Calu3 (cell line): ENCODE measurements at regions of chrX and their contacts with region 1.

Region 1: GRCh38 chrX:48021026-48021900 is 14.5 kb downstream of the SPACA5 start:
- DNase-seq: peak; percentile 79
- H3K4me3 Mint-ChIP-seq: peak overlapping the region; percentile 86
- H3K27ac Mint-ChIP-seq: peak overlapping the region; percentile 99
- H3K4me1 Mint-ChIP-seq: peaks cover 8% of the 10 kb centered on the region
- H3K27me3 Mint-ChIP-seq: no peaks in the 10 kb centered on the region
- CTCF ChIP-seq: no peak

Region 2: DNA sequence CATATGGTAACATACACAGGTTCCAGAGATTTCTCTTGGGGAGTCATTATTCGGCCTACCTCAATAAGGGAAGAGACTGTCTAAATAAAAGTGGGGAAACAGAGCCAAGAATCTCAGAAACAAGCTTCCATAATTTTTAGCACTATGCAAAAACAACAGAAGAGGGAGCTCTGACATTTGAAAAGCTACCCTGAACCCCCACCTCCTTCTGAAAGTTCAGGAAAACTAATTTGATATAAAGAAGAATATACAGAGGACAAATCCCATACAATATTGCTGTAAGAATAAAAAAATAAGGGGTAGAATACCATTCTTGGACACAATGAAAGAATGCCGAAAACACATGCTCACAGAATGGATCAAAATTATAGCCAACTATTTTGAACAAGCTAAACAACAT is 524.0 kb before region 1 on chrX:
- CTCF ChIA-PET with region 1: no interaction called
- intact Hi-C with region 1: loop called (anchors 5 kb)
- DNase-seq: no peak
- H3K4me3 Mint-ChIP-seq: no peak overlapping the region
- H3K27ac Mint-ChIP-seq: no peak overlapping the region
- H3K4me1 Mint-ChIP-seq: no peaks in the 10 kb centered on the region
- H3K27me3 Mint-ChIP-seq: no peaks in the 10 kb centered on the region
- CTCF ChIP-seq: no peak

Region 3: GRCh38 chrX:47836164-47837072 is 184.8 kb before region 1 on chrX and contains the start of gene ZNF81:
- CTCF ChIA-PET with region 1: no interaction called
- intact Hi-C with region 1: loop called (anchors 1 kb)
- DNase-seq: peak; percentile 93
- H3K4me3 Mint-ChIP-seq: peak within 1 kb of the TSS; percentile 96
- H3K27ac Mint-ChIP-seq: peak within 1 kb of the TSS; percentile 83
- H3K4me1 Mint-ChIP-seq: no peaks in the 10 kb centered on the region
- H3K27me3 Mint-ChIP-seq: no peaks in the 10 kb centered on the region
- CTCF ChIP-seq: no peak
- total RNA-seq, gene ZNF81: 10.5 and 10.7 TPM in 2 replicates

Region 4: GRCh38 chrX:47854474-47854873 is 166.8 kb before region 1 on chrX:
- CTCF ChIA-PET with region 1: no interaction called
- intact Hi-C with region 1: loop called (anchors 1 kb)
- DNase-seq: peak; percentile 26
- H3K4me3 Mint-ChIP-seq: no peak overlapping the region
- H3K27ac Mint-ChIP-seq: no peak overlapping the region
- H3K4me1 Mint-ChIP-seq: no peaks in the 10 kb centered on the region
- H3K27me3 Mint-ChIP-seq: no peaks in the 10 kb centered on the region
- CTCF ChIP-seq: no peak